ENCODE measurements at regions of chr20 and their contacts with region 1.

Region 1: GRCh38 chr20:561437-562231 is 18.0 kb upstream of the CSNK2A1 start:
- DNase-seq: peak; percentile 52
- ATAC-seq: peak; percentile 87 to 91

Region 2: DNA sequence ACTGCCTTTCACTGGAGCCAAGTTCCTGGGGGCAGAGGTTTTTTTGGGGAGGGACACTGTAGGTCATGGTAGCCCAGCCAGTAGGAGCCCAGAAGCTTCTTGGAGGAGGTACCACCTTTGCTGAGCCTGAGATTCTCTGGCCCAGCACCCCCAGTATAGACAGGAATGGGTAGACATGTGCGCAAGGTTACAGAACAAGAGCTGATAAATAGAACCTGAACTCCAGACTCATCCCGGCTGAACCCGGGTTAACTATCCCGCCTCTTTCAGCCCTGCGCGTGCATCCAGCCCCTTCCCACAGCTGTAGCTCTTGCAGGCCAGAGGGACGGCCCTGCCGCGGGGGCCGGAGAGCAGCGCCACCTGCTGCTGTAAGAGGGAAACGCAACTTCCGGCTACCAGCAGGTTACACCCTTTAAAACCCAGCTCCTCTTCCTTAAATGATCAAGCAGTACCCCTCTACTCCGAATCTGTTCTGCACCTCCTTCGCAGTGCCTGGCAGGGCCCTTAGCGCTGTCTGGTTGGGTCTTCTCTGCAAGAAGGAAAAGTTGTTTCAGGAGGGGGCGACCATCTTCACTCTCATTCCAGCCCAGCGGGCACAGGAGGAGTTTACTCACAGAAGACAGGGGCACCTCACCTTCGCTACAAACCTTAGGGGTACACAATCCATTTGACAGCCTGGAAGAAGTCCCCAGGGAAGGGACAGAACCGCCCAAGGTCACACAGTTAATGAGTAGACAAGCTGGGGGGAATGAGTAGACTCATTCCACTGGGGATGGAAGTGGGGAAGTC is 83.9 kb after region 1 on chr20:
- intact Hi-C with region 1: loop called (anchors 2 to 5 kb)
- DNase-seq: peak; percentile 74
- ATAC-seq: peak; percentile 70 to 75

Region 3: GRCh38 chr20:728248-728944 is 166.8 kb after region 1 on chr20:
- intact Hi-C with region 1: loop called (anchors 2 to 10 kb)
- DNase-seq: peak; percentile 46
- ATAC-seq: peak; percentile 88 to 89

Measured in left cardiac atrium (tissue), 4 donors.